ENCODE measurements at regions of chr12 and their contacts with region 1.

Region 1: DNA sequence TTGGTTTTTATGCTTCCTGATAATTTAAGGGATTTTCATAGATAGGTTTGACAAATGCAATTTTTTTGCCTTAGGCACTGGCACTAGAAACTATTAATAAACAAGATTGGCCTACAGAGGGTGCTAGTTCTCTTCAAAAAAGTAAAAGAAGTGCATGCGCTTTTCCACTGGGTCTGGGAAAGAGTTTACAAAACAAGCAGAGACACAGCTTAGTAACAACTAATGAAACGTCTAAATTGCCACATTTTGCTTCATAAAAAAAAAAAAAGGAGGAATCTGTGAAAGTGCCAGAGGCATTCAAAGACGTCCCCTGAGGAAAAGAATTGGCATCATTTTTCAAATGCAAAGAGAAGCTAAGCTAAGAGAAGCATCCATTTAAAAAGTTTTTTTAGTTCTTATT is 58.3 kb upstream of the EEA1 start:
- DNase-seq: peak; percentile 82
- H3K4me3 ChIP-seq: no peak overlapping the region
- H3K27ac ChIP-seq: no peak overlapping the region
- H3K4me1 ChIP-seq: peaks cover 4% of the 10 kb centered on the region
- H3K27me3 ChIP-seq: no peaks in the 10 kb centered on the region
- CTCF ChIP-seq: peak; percentile 28 to 30
- POLR2A ChIP-seq: no peak

Region 2: GRCh38 chr12:92717202-92717601 is 270.2 kb before region 1 on chr12:
- CTCF ChIA-PET with region 1: interaction called, 8 read pairs
- POLR2A ChIA-PET with region 1: no interaction called
- dilution Hi-C with region 1: no loop called
- intact Hi-C with region 1: loop called (anchors 2 kb)
- DNase-seq: peak; percentile 64
- H3K4me3 ChIP-seq: no peak overlapping the region
- H3K27ac ChIP-seq: no peak overlapping the region
- H3K4me1 ChIP-seq: no peaks in the 10 kb centered on the region
- H3K27me3 ChIP-seq: no peaks in the 10 kb centered on the region
- CTCF ChIP-seq: peak; percentile 45 to 52
- POLR2A ChIP-seq: no peak

Region 3: DNA sequence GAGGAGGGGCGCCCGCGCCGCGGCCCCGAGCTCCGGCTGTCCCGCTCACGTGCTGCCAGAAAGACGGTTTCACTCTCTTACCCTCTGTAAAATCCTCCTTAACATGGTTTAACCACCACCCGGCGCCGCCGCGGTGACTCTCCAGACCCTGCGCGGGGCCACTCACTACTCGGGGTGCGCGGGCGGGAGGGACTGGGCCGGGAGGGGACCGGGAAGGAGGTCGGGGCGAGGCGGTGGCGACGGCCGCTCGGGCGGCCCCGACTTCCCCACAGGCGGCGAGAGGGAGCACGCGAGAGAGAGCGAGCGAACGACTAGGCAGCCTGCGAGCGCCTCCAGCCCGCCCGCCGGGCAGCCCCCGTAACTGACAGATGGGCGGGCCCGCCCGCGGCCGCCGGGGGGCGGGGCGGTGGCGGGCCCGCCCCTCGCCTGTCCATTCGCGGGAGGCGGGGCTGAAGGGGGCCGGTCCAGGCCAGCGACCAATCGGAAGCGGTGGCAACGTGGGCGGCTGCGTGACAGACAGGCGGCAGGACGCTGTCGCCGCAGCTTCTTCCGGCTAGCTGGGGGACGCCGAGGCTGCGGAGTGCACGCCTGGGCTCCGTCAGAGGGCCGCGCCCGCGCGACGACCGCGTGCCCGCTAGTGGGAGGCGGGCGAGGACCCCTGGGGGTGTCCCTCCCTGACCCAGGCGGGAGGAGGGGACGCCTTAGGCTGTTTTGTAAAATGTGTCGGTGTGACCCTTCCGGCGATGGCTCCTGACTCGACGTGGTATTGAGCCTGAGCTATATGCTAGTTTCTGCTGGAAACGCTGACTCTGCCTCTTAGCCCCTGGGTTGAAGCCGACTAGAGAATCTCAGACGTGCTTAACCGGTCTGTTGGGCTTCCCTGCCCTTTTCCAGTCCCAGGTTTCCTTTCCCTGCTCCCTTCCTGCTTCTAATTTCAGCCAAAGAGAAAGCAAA is 58.1 kb before region 1 on chr12 and contains the start of gene EEA1:
- CTCF ChIA-PET with region 1: interaction called, 11 read pairs
- POLR2A ChIA-PET with region 1: no interaction called
- dilution Hi-C with region 1: no loop called
- intact Hi-C with region 1: loop called (anchors 1 kb)
- DNase-seq: peak; percentile 96
- H3K4me3 ChIP-seq: peak within 1 kb of the TSS; percentile 91 to 97 (median 95)
- H3K27ac ChIP-seq: peak within 1 kb of the TSS; percentile 90
- H3K4me1 ChIP-seq: peaks cover 17% of the 10 kb centered on the region
- H3K27me3 ChIP-seq: no peaks in the 10 kb centered on the region
- CTCF ChIP-seq: peak in 1 of 2 donors; percentile 34
- POLR2A ChIP-seq: peak; percentile 83
- total RNA-seq, gene EEA1: 37.9 and 38.8 TPM in 2 replicates

Region 4: DNA sequence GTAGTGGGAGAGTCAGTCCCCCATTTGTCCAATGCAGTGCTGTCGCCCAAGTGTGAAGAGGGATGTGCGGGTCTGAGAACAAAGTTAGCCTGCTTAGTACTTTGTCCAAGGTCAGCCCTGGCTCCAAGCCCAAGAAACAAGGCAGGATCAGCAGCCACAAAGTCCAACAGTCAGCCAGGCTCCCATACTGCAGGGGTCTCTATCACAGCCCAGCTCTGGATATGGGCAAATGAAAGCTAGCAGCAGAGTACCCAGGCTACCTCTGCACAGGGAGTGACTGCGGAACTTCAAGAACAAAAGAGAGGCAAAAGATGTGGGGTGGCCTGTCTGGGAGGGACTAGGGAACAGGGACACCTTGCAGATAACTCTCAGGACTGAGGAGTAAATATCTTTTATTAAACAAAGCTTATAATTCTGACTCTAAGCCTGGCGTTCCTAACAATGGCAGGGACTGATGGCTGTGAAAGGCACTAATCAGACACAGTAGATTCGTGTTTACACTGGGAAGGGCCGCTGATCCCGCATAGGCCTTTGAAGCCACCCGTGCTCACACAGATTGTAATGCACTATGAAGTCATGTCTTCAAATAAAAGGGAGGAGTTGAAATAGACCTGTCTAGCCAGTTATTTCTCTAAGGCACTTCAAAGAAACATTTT is 32.7 kb after region 1 on chr12:
- CTCF ChIA-PET with region 1: interaction called, 31 read pairs
- POLR2A ChIA-PET with region 1: no interaction called
- dilution Hi-C with region 1: no loop called
- intact Hi-C with region 1: loop called (anchors 1 kb)
- DNase-seq: peak; percentile 62
- H3K4me3 ChIP-seq: no peak overlapping the region
- H3K27ac ChIP-seq: peak overlapping the region; percentile 46
- H3K4me1 ChIP-seq: peaks cover 39% of the 10 kb centered on the region
- H3K27me3 ChIP-seq: no peaks in the 10 kb centered on the region
- CTCF ChIP-seq: no peak
- POLR2A ChIP-seq: no peak

Region 5: DNA sequence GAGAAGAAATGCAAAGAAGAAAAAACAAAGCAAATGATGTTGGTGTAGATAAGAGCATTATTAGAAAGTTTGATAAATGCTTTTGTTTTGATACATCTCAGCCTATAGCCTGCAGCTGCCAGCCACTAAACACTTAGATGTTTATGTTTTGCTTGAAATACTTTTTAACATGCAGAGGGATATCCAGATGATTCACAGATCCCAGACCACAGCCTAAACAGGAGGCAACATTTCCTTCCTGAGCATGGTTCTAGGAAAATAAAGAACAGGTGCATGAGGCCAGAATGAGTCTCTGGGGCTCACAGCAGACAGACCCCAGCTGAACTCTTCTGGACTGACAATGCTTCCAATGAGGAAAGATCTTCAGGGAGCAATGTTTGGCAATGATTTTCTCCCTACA is 45.4 kb after region 1 on chr12:
- CTCF ChIA-PET with region 1: no interaction called
- POLR2A ChIA-PET with region 1: no interaction called
- dilution Hi-C with region 1: no loop called
- intact Hi-C with region 1: no loop called
- DNase-seq: peak; percentile 98
- H3K4me3 ChIP-seq: no peak overlapping the region
- H3K27ac ChIP-seq: peak overlapping the region; percentile 82
- H3K4me1 ChIP-seq: peaks cover 19% of the 10 kb centered on the region
- H3K27me3 ChIP-seq: no peaks in the 10 kb centered on the region
- CTCF ChIP-seq: no peak
- POLR2A ChIP-seq: peak; percentile 60

Region 6: DNA sequence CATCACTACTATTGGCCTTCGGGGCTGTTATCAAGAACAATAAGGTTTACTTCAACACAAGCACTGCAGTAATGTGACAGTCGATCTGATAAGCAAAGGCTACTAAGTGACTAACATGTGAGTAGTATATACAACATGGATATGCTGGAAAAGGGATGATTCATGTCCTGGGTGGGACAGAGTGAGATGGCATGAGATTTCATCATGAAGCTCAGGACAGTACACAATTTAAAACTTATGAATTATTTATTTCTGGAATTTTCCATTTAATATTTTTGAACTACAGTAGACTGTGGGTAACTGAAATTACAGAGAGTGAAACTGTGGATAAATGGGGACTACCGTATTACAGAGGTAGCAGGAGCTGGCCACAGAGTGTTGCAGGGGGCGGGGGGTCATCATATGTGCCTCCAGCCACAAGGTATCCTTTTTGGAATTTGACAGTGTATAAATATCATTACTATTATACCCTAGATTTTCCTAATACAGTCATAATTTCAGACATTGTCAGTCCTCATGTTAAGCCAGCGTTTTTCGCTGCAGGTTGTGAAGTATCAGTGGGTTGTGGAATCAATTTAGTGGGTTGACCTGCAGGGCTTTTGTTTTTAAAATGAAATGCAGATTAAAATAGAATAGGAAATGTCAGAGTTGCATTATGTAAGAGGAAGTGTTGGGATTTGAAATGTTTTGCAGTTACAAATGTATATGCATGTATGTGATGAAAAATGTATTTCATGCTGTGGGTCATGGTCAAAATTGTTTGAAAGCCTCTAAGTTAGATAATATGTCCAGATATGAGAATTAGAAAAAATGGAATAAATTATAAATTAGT is 242.3 kb after region 1 on chr12:
- CTCF ChIA-PET with region 1: no interaction called
- POLR2A ChIA-PET with region 1: no interaction called
- dilution Hi-C with region 1: no loop called
- intact Hi-C with region 1: loop called (anchors 5 kb)
- DNase-seq: peak; percentile 72
- H3K4me3 ChIP-seq: no peak overlapping the region
- H3K27ac ChIP-seq: peak overlapping the region; percentile 57
- H3K4me1 ChIP-seq: peaks cover 21% of the 10 kb centered on the region
- H3K27me3 ChIP-seq: no peaks in the 10 kb centered on the region
- CTCF ChIP-seq: no peak
- POLR2A ChIP-seq: no peak

Region 7: DNA sequence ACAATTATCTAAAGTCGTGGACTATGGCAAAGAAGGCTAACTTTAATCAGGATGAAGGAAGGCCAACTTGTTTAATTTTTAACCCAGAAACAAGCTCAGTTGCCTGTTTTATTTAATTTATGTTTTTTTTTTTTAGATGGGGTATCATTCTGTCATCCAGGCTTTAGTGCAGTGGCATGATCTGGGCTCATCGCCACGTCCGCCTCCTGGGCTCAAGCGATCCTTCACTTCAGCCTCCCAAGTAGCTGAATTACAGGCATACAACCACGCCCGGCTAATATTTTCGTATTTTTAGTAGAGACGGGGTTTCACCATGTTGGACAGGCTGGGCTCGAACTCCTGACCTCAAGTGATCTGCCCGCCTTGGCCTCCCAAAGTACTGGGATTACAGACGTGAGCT is 410.1 kb after region 1 on chr12:
- CTCF ChIA-PET with region 1: interaction called, 79 read pairs
- POLR2A ChIA-PET with region 1: interaction called, 4 read pairs
- dilution Hi-C with region 1: no loop called
- intact Hi-C with region 1: loop called (anchors 2 kb)
- DNase-seq: no peak
- H3K4me3 ChIP-seq: no peak overlapping the region
- H3K27ac ChIP-seq: no peak overlapping the region
- H3K4me1 ChIP-seq: no peaks in the 10 kb centered on the region
- H3K27me3 ChIP-seq: no peaks in the 10 kb centered on the region
- CTCF ChIP-seq: no peak
- POLR2A ChIP-seq: no peak

Measured in endothelial cell of umbilical vein (primary cell).